AG04450 (cell line): ENCODE measurements at regions of chr3 and their contacts with region 1.

Region 1: DNA sequence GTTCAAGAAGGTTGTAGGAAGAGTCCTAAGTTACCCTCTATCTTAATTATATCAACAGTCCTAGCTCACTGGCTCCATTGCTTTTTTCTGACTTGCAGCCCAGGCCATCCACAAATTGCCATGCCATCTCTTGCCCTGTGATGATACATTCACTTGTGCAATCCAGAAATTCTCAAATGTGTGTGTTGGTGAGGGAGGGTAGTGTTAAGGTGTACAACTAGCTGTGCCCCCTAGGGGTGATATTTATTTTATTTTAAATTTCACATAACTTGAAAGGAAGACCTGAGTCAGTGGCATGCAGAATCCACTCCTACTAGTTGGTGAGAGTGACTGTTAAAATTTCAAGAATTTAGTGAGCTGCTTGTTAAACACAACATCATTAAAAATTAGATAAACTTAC is 156.1 kb upstream of the ANKRD28 start:
- DNase-seq: no peak
- H3K4me3 ChIP-seq: no peak overlapping the region
- H3K27ac ChIP-seq: no peak overlapping the region
- H3K27me3 ChIP-seq: no peaks in the 10 kb centered on the region
- CTCF ChIP-seq: no peak

Region 2: GRCh38 chr3:16247276-16248061 is 293.6 kb after region 1 on chr3:
- CTCF ChIA-PET with region 1: interaction called, 10 read pairs
- POLR2A ChIA-PET with region 1: no interaction called
- DNase-seq: peak; percentile 71
- H3K4me3 ChIP-seq: no peak overlapping the region
- H3K27ac ChIP-seq: no peak overlapping the region
- H3K27me3 ChIP-seq: no peaks in the 10 kb centered on the region
- CTCF ChIP-seq: peak; percentile 93